ENCODE measurements at regions of chr7 and their contacts with region 1.

Region 1: GRCh38 chr7:105268511-105269392 is 120.0 kb downstream of the SRPK2 start:
- DNase-seq: no peak
- ATAC-seq: peak; percentile 65
- H3K4me3 Mint-ChIP-seq: peak overlapping the region; percentile 78
- H3K27ac Mint-ChIP-seq: peak overlapping the region; percentile 96
- H3K4me1 Mint-ChIP-seq: peaks cover 63% of the 10 kb centered on the region
- H3K27me3 Mint-ChIP-seq: no peaks in the 10 kb centered on the region

Region 2: GRCh38 chr7:105289704-105290103 is 21.0 kb after region 1 on chr7:
- CTCF ChIA-PET with region 1: interaction called, 8 read pairs
- POLR2A ChIA-PET with region 1: no interaction called
- intact Hi-C with region 1: loop called in 1 of 2 experiments (anchors 1 kb)
- DNase-seq: peak; percentile 30
- ATAC-seq: peak; percentile 95
- H3K4me3 Mint-ChIP-seq: peak overlapping the region; percentile 6
- H3K27ac Mint-ChIP-seq: peak overlapping the region; percentile 73
- H3K4me1 Mint-ChIP-seq: peaks cover 25% of the 10 kb centered on the region
- H3K27me3 Mint-ChIP-seq: no peaks in the 10 kb centered on the region

Region 3: GRCh38 chr7:105298439-105298907 is 29.7 kb after region 1 on chr7:
- CTCF ChIA-PET with region 1: interaction called, 5 read pairs
- POLR2A ChIA-PET with region 1: no interaction called
- intact Hi-C with region 1: loop called in 1 of 2 experiments (anchors 2 kb)
- DNase-seq: peak; percentile 65
- ATAC-seq: peak; percentile 92
- H3K4me3 Mint-ChIP-seq: peak overlapping the region; percentile 53
- H3K27ac Mint-ChIP-seq: peak overlapping the region; percentile 90
- H3K4me1 Mint-ChIP-seq: peaks cover 58% of the 10 kb centered on the region
- H3K27me3 Mint-ChIP-seq: no peaks in the 10 kb centered on the region

Region 4: DNA sequence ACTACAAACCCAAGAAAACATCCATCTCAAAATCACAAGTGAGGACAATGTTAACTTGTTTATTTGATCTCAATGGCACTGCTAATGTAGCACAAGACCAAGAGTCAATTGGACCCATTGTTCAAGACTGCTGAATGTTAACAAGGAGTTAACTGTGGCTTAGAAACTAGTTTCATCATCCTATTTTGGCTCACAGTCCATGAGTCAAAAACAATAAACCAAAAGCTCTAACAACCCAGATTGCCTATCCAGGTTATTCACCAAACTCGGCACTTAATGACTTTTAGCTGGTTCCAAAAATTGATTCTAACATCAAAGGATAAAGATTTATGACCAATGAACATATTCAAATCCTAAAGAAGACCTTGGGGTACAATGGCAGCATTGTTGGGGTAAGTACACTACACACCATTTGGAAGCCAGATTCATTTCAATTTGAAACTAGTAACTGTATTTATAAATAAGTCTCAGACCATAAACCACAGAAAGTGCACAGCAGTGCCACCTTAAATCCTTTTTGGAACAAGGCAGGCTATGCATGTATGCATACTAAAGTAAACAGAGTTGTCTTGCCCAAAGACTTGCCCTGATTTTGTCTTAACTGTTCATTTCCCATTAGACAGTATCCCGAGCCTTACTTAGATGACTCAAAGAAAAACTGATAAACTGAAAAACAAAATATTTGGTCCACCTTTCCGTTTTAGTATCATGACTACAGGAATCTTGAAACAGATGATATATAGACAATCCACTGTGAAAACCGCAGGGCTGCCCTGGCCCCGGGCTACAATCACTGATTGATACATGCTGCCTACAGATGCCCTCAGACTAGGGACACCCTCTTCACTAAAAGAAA is 35.5 kb after region 1 on chr7:
- CTCF ChIA-PET with region 1: interaction called, 3 read pairs
- POLR2A ChIA-PET with region 1: no interaction called
- intact Hi-C with region 1: loop called (anchors 1 to 5 kb)
- DNase-seq: peak; percentile 37
- ATAC-seq: peak; percentile 31
- H3K4me3 Mint-ChIP-seq: no peak overlapping the region
- H3K27ac Mint-ChIP-seq: peak overlapping the region; percentile 40
- H3K4me1 Mint-ChIP-seq: peaks cover 70% of the 10 kb centered on the region
- H3K27me3 Mint-ChIP-seq: no peaks in the 10 kb centered on the region

Region 5: DNA sequence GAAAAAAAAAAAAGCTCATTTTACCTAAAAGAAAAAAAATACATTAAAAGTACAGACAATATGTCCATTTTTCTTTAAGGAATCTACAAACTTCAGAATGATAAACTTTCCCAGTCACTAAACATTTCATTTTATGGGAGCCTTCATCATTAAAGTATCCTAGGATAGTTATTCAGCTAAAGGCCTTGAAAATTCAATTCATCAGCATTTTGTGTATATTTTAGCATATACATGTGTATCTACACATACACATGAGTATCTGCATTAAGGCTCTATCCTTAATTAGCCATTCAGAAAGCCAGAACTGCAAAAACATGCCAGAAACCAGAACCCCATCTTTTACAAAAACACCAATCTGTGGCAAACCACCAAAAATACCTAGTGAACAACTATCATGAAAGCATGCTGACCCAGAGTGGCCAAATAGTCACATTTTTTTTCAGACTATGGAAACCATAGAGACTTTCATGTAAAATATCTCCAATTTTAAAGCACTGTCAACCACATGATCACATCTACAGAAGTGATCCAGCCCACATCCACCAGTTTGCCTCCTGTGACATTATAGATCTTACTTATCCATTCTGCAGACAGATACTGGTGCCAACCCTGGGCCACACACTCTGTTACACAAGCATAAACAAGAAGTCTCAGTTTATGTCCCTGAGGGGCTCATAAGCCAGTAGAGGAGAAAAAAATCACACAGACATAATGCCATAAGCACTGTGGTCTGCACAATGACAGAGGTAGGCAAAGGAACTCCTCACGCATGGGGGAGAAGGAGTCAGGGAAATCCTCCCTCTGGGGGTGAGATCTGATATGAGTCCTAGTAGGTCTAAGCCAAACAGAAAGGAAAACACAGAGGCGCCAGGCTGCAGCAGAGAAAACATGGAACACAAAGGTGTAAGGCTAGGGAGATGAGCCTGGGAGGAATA is 40.8 kb after region 1 on chr7:
- CTCF ChIA-PET with region 1: interaction called, 3 read pairs
- POLR2A ChIA-PET with region 1: no interaction called
- intact Hi-C with region 1: loop called (anchors 1 to 5 kb)
- DNase-seq: peak; percentile 16
- ATAC-seq: peak; percentile 39
- H3K4me3 Mint-ChIP-seq: no peak overlapping the region
- H3K27ac Mint-ChIP-seq: peak overlapping the region; percentile 30
- H3K4me1 Mint-ChIP-seq: peaks cover 56% of the 10 kb centered on the region
- H3K27me3 Mint-ChIP-seq: no peaks in the 10 kb centered on the region

Measured in activated CD4-positive, alpha-beta T cell treated with anti-CD3 and anti-CD28 coated beads for 36 hours (primary cell).